Activated naive CD4-positive, alpha-beta T cell treated with anti-CD3 and anti-CD28 coated beads for 36 hours (primary cell): ENCODE measurements at regions of chr14 and their contacts with region 1.

Region 1: GRCh38 chr14:61730756-61731373 is 31.4 kb upstream of the SNAPC1 start:
- DNase-seq: no peak
- H3K4me3 Mint-ChIP-seq: no peak overlapping the region
- H3K27ac Mint-ChIP-seq: peak overlapping the region; percentile 65
- H3K4me1 Mint-ChIP-seq: peaks cover 58% of the 10 kb centered on the region
- H3K27me3 Mint-ChIP-seq: no peaks in the 10 kb centered on the region

Region 2: DNA sequence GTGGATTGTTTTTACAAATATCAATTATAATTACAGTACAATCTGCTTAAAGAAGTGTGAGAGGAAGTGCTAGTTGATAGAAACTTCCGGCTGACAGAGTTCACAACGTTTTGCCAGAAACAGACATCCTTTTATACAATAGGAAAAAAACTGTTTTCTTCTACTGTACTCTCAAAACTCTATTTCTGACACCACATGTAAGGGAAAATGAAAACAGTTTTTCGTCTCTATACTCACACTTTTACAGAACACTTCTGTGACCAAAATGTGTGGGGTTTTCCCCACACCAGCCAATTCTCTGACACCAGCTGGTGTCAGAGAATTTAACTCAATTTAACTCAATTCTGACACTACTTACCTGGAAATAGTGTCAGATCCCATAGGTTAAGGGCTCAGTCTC is 59.8 kb before region 1 on chr14:
- CTCF ChIA-PET with region 1: no interaction called
- intact Hi-C with region 1: loop called (anchors 2 kb)
- DNase-seq: peak; percentile 69
- H3K4me3 Mint-ChIP-seq: peak overlapping the region; percentile 35
- H3K27ac Mint-ChIP-seq: no peak overlapping the region
- H3K4me1 Mint-ChIP-seq: peaks cover 25% of the 10 kb centered on the region
- H3K27me3 Mint-ChIP-seq: no peaks in the 10 kb centered on the region

Region 3: DNA sequence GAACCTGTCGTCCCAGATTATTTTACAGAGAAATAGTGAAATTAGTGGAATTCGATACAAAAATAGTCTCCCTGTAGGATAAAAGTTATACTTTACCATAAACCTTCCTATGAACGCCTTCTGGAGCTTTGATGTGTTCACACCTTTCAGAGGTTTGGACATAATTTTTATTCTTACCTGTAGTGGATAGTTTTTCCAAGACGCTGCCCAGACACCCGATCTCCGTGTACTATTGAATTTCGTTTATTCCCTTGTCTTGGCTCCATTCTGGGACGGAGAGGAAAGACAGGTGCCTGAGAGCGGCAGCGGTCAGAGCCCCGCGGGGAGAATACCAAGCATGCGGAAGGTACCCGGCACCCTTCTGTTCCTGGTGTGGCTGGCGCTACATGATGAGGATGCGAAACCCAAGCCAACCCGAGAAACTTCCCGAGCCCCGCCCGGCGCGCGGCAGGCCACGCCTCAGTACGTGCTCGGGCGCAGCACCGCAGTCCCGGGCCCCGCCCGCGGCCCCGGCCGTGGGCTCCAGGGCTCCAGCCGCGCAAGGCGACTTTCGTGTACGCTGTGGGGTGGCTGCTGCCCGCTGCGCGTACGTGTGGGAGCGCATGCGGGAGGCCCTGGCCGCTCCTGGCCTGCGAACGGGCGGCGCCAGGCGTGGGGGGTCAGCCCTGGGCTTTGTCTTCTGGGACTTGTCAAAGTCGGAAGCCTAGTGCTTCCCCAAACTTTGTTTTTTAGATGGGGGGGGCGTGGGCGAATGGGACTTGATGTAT is 20.0 kb after region 1 on chr14:
- CTCF ChIA-PET with region 1: no interaction called
- intact Hi-C with region 1: loop called (anchors 2 kb)
- DNase-seq: peak; percentile 87
- H3K4me3 Mint-ChIP-seq: peak overlapping the region; percentile 75
- H3K27ac Mint-ChIP-seq: peak overlapping the region; percentile 75
- H3K4me1 Mint-ChIP-seq: peaks cover 24% of the 10 kb centered on the region
- H3K27me3 Mint-ChIP-seq: no peaks in the 10 kb centered on the region